Ascending aorta (tissue), 2 donors: ENCODE measurements at regions of chr12 and their contacts with region 1.

Region 1: DNA sequence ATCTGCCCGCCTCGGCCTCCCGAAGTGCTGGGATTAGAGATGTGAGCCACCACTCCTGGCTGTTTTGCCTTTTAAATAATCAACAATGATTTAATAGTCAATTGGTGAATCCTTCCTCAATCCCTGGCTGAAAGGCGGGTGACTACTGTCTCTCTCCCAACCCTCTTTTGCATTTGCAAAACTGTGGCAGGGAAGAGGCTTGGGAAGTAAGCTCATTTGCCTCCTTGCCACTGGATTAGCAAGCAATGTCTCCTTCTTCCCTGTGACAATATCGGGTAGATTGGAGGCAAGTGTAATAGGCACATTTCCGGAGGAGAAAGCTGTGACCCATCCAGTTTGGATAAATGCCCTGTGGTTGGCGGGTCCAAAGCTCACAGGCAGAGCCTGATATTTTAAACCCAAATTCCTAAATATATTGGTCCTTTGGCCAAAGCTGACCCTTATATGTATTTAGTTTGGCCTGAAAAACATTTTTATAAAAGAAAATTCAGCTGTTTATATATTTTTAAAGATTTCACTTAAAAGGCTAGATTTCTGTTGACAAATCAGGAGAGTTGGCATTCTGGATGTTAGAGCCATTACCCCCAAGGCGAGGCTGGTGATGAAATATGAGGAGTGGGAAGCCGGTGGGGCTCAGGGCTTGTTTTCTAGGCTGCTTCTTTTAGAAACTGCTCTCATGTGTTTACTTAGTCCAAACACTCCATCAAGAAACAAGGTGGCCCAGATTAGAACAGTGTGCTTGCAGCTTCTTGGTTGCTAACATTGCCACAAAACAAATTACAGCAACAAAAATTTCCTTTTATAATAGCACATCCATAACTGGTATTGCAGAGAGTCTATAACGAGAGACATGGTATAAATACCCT is 646.9 kb upstream of the TMEM132C start:
- DNase-seq: peak in 1 of 2 donors; percentile 74
- H3K4me3 ChIP-seq: peak overlapping the region in 1 of 2 donors; percentile 30
- H3K27ac ChIP-seq: peak overlapping the region; percentile 70 to 80
- H3K4me1 ChIP-seq: peaks cover 0 to 23% of the 10 kb centered on the region in 2 donors
- H3K27me3 ChIP-seq: no peaks in the 10 kb centered on the region
- CTCF ChIP-seq: no peak

Region 2: DNA sequence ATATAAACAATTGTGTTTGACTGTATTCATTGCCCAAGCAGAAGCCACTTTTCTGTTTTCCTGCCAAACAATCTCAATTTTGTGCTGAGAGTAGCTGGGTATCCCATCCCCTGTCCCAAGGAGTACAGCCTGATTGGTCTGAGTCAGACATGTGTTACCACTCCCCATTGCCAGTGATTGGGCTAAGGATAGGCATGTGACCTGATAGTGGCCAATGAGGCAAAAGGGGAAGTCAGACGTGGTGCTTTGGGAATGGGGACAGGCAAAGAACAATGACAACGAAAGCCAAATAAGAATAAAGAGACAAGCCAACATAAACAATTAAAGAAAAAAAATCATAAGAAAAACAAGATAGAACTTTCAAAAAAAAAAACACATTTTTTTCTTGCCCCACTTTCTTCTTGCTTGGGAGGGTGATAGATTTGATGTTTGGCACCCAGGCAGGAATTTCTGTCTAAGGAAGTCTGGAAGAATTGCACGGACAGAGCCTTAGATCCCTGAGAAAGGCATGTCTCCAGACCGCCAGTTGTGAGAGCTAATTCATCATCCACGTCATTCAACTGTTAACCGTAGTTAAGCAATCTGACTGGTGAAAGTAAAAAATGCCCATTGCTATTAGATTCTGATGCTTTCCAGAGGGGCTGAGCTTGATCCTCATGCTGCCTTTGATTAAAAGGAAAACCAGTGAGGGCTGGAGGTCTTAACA is 20.2 kb after region 1 on chr12:
- intact Hi-C with region 1: loop called (anchors 2 kb)
- DNase-seq: peak; percentile 14 to 86
- H3K4me3 ChIP-seq: peak overlapping the region in 1 of 2 donors; percentile 6
- H3K27ac ChIP-seq: peak overlapping the region; percentile 72 to 81
- H3K4me1 ChIP-seq: peaks cover 0 to 16% of the 10 kb centered on the region in 2 donors
- H3K27me3 ChIP-seq: no peaks in the 10 kb centered on the region
- CTCF ChIP-seq: no peak